ENCODE measurements at regions of chr22 and their contacts with region 1.

Region 1: DNA sequence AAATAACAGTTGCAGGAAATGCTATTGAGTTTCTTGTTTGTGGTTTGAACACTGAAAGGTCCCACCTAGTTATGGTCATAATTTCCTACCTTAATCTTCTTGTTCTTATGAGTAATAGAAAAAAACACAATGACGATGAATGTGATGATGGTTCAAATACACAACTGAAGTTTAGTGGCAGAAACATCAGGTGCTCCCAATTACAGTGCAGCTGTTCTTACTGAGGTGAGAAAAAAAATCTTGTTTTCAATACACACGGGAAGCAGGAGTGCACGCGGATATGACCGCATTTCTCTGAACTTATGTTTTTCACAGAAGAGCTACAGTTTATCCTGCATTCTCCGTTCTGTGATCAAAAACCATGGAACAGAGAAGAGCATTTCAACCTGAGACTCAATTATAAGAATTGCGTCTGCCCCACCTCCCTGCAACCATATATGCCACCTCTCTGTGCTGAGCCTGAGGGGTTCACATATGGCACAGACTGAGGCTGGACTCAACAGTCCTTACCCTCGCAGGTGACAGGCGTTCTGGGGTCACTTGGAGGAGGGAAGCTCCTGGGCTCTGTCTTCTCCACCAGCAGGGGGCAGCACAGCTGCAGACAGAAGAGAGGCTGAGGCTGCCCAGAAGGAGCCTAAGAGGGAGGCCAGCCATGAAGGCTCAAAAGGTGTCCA is 99.7 kb upstream of the IGLL5 start:
- DNase-seq: peak; percentile 78
- ATAC-seq: peak; percentile 86
- H3K4me3 Mint-ChIP-seq: no peak overlapping the region
- H3K27ac Mint-ChIP-seq: peak overlapping the region; percentile 17
- H3K4me1 Mint-ChIP-seq: peaks cover 28% of the 10 kb centered on the region
- H3K27me3 Mint-ChIP-seq: peaks cover 3% of the 10 kb centered on the region

Region 2: DNA sequence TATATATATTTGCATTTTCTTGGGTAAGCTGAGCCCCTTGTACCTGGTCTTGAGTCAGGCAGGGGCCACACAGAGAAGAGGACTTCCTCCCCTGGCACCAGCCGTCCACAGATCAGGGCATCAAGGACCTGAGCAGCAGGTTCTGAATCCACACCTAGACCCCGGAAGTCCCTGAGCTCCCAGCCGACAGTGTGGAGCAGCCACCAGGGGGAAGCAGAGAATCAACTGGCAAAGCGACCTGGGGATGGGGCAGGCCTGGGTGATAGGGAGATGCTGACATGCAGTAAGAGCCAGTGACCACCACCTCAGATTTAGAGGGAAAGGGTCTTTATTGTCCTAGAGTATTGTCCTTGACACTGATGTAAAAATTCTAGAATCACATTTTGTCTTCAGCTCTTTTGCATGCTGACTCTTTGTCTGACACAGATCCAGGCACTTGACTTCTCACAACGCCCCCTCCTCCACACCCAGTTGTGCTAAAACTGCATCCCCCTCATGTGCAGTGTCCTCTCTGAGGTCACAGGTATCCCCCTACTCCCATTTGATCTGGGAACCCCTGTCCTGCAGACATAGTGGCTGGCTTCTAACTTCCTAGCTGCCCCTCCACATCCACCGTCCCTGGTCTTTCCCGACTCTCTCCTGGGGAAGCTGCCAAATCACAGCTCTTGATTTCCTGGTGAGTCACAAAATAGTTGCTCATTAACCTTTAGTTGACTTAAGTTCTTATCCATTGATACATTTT is 34.2 kb before region 1 on chr22:
- CTCF ChIA-PET with region 1: interaction called, 28 read pairs
- DNase-seq: peak; percentile 89
- ATAC-seq: peak; percentile 97
- H3K4me3 Mint-ChIP-seq: no peak overlapping the region
- H3K27ac Mint-ChIP-seq: no peak overlapping the region
- H3K4me1 Mint-ChIP-seq: peaks cover 20% of the 10 kb centered on the region
- H3K27me3 Mint-ChIP-seq: no peaks in the 10 kb centered on the region

Region 3: GRCh38 chr22:22802339-22802970 is 14.5 kb after region 1 on chr22:
- CTCF ChIA-PET with region 1: interaction called, 57 read pairs
- DNase-seq: peak; percentile 60
- ATAC-seq: peak; percentile 36
- H3K4me3 Mint-ChIP-seq: no peak overlapping the region
- H3K27ac Mint-ChIP-seq: no peak overlapping the region
- H3K4me1 Mint-ChIP-seq: peaks cover 4% of the 10 kb centered on the region
- H3K27me3 Mint-ChIP-seq: peaks cover 11% of the 10 kb centered on the region

Region 4: DNA sequence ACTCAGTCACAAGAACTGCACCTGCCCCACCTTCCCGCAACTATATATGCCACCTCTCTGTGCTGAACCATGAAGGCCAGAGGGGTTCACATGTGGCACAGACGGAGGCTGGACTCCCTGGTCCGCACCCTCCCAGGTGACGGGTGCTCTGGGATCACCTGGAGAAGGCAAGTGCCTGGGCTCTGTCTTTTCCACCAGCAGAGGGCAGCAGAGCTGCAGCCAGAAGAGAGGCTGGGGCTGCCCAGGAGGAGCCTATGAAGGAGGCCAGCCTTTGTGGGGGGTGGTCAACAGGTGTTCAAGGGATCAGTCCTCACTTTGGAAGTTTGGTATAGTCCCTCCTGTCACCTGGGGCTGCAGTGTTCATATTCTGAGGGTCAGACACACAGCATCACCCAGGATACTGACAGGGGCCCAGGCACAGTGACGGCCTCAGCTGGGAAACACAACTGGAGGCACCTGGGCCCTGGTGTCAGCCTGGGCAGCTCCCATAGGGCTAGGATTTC is 60.5 kb after region 1 on chr22:
- CTCF ChIA-PET with region 1: interaction called, 27 read pairs
- DNase-seq: peak; percentile 77
- ATAC-seq: peak; percentile 90
- H3K4me3 Mint-ChIP-seq: no peak overlapping the region
- H3K27ac Mint-ChIP-seq: no peak overlapping the region
- H3K4me1 Mint-ChIP-seq: peaks cover 10% of the 10 kb centered on the region
- H3K27me3 Mint-ChIP-seq: peaks cover 26% of the 10 kb centered on the region

Region 5: DNA sequence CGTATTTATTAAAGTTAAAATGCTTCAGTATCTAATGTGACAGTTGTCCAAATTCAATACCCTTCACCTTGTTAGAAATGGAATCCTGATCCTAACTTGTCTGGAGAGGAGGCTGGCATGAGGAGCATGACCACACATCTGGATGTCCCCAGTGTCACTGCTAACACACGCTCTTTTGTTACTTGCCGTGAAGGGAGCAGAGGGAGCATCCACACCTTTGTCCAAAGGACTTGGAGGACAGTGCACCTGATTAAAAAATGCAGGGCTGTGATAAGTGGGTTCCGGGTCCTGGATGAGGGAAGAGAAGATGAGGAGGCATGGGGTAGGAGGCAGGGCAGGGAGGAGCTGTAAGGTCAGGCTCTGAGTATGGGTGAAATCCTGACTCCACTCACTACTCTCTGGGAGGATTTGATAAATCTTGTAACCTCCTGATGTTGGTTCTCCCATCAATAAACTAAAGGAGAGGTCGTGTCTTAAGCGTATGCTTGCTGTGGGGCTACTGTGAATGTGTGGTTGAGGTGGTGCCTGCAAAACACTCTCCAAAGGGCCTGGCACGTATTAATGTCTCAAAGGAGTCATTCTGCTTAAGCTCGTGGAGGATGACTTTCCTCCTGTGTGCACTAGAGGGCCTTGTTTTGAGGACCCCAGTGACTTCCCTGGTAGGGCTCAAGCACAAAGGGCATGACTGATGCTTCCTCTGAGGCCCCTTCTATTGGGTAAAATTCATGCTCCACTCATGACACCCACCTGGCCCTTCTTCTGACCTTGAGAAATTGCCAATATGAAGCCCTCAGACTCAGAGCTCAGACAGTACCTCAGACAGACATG is 82.9 kb after region 1 on chr22:
- CTCF ChIA-PET with region 1: interaction called, 15 read pairs
- DNase-seq: no peak
- ATAC-seq: no peak
- H3K4me3 Mint-ChIP-seq: no peak overlapping the region
- H3K27ac Mint-ChIP-seq: no peak overlapping the region
- H3K4me1 Mint-ChIP-seq: peaks cover 8% of the 10 kb centered on the region
- H3K27me3 Mint-ChIP-seq: peaks cover 40% of the 10 kb centered on the region